ENCODE measurements at regions of chr16 and their contacts with region 1.

Region 1: GRCh38 chr16:56632156-56632847 is at the start of gene MT1M:
- DNase-seq: peak; percentile 82 to 85
- ATAC-seq: peak; percentile 59 to 71 (median 65)
- H3K4me3 ChIP-seq: peak within 1 kb of the TSS; percentile 67
- H3K27ac ChIP-seq: peak within 1 kb of the TSS; percentile 34
- H3K4me1 ChIP-seq: peaks cover 12% of the 10 kb centered on the region
- H3K27me3 ChIP-seq: peaks cover 0 to 2% (median 0%) of the 10 kb centered on the region in 3 donors
- CTCF ChIP-seq: no peak
- total RNA-seq, gene MT1M: 1.4 to 288 (median 12.8) TPM

Region 2: DNA sequence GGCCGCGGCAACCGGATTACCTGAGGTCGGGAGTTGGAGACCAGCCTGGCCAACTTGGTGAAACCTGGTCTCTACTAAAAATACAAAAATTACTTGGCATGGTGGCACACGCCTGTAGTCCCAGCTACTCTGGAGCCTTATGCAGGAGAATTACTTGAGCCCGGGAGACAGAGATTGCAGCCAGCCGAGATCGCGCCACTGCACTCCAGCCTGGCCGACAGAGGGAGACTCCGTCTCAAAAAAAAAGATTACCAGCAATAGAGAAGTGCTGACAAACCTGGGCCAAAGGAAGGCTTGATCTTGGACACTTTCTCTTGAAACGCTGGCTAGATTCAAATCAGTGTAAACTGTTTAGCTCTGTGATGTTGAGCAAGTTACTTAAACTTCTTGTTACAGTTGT is 41.6 kb after region 1 on chr16:
- intact Hi-C with region 1: loop called (anchors 2 to 5 kb)
- DNase-seq: peak in 1 of 2 donors; percentile 72
- ATAC-seq: peak; percentile 58 to 91 (median 79)
- H3K4me3 ChIP-seq: no peak overlapping the region
- H3K27ac ChIP-seq: no peak overlapping the region
- H3K4me1 ChIP-seq: peaks cover under 1% of the 10 kb centered on the region
- H3K27me3 ChIP-seq: peaks cover 0 to 26% (median 4%) of the 10 kb centered on the region in 3 donors
- CTCF ChIP-seq: peak; percentile 71